ENCODE measurements at regions of chr16 and their contacts with region 1.

Region 1: DNA sequence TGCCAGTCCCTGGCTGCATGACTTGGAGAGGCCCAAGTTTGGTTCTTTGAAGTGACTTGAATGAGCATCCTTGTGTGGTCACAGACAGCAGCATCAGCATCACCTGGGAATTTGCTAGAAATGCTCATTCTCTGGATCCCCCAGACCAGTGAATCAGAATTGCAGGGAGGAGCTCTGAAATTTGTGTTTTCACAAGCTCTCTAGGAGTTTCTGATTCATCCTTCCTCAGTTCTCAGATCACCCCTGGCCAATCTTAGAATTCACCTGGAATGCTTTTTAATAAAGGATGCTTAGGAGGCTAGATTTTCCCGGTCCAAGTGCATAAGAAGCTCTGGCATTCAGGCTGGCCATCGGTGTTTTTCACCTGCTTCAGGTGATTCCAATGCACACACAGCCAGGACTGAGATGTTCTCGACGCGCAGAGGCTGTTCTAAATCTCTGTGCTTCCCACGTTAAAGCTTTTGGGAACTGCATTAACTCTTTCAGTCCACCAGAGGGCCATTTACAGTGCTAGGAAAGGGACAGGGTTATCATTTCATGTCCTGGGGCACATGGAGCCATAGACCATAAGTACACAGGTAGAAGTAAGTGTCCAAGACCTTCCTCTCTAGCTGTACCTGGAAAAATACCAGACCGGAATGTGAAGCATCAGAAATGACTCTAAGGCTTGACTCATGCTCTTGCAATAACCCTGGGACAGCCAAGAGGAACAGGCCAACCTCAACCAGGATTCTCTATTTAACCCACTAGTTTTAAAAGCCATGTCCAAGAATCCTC is 85.7 kb upstream of the XYLT1 start:
- DNase-seq: no peak
- H3K4me3 ChIP-seq: no peak overlapping the region
- CTCF ChIP-seq: peak; percentile 57

Region 2: DNA sequence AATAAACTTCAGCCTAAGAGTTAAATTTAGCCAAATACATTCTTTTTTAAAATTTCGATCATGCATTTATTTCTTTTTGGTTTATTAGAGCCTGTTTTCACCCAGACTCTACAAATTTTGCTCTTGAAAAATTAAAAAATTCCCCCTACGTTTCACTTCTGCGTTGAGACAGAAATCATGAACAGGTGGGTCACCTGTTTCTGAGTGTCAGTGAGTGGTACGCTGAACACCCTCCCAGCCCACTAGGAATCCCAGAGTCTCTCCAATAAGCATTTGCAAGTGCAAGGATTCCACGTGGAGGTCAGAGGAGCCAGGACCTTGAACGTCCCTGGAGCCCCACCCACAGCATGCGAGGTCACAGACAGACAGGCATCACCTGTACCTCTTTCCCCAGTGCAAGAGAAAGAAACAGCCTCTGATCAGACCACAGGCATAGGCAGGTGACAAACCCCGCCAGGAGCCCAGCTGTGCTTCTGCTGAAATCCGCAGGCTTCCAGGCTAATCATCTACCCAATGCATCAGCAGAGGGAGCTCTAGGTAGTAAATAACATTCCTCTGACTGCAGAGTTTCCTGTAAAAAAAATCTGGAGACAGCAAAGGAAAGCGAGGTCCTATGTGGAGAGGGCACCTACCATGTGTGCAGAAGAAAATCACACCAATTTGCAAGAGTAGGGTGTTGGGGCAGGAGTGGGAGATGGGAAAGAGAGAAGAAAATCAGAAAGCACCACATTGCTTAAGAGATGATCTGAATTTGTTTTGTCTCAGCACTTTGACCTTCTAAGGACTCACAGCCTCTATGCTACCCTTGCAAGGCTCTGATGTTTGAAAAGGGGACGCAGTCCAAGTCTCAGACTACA is 79.8 kb before region 1 on chr16:
- CTCF ChIA-PET with region 1: interaction called, 78 read pairs
- POLR2A ChIA-PET with region 1: no interaction called
- DNase-seq: no peak
- H3K4me3 ChIP-seq: no peak overlapping the region
- CTCF ChIP-seq: peak; percentile 67

Region 3: GRCh38 chr16:17511340-17511739 is 45.1 kb before region 1 on chr16:
- CTCF ChIA-PET with region 1: interaction called, 19 read pairs
- POLR2A ChIA-PET with region 1: interaction called, 3 read pairs
- DNase-seq: peak; percentile 73
- H3K4me3 ChIP-seq: no peak overlapping the region
- CTCF ChIP-seq: no peak

Region 4: DNA sequence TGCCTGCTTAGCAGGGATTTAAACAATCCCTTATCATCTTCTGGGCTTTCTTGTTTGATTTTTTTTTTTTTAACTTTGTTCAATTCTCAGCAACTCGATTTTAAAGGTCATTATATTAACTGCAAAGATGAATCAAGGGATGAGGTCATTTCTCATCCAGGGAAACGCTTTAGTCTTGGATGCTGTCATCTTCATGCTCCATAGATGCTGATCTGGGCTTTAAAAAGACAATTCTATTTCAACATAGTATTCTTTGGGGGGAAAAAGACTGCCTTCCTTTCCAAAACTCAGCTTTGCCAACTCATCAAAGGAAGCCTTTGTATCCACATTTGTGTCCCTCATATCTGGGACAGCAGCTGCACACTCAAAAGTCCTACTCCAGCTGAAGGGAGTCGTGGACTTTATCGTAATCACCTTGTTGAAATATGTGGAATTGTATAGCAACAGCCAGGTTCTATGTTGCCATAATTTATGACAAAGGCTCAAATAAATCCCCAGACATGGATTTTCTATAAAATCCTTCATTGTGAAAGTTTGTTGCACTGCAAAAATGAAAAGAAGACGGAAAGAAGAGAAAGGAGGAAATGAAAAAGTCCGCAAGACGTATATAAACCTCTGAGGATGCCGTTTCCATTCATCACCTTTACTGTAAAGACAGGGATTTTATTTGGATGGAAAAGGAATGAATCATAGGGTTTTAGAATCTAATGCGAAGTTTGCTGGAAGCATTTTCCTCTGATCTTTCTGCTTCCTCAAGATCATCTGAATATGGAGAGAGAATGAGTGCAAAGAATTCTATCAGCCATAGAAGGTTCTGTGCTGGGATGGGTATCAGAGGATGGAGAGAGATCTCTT is 37.1 kb before region 1 on chr16:
- CTCF ChIA-PET with region 1: interaction called, 13 read pairs
- POLR2A ChIA-PET with region 1: interaction called, 3 read pairs
- DNase-seq: no peak
- H3K4me3 ChIP-seq: no peak overlapping the region
- CTCF ChIP-seq: no peak

Region 5: DNA sequence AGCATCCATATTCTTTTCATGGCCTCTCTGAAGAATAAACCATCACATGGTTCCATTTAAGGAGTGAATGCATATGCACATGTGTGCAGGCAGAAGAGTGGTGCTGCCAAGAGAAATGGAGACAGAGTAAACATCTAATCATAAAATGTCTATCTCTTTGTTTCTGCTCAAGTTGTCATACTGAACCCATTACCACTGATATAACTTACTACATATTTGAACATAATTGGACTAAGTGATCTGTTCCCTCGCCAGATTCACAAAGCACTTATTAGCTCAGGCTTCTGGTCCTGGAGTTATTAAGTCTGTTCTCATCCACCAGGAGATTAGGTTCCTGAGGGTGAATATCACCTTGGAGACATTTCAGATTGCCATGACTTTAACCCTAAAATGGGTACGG is 13.4 kb before region 1 on chr16:
- CTCF ChIA-PET with region 1: interaction called, 31 read pairs
- POLR2A ChIA-PET with region 1: no interaction called
- DNase-seq: no peak
- H3K4me3 ChIP-seq: no peak overlapping the region
- CTCF ChIP-seq: no peak

Region 6: DNA sequence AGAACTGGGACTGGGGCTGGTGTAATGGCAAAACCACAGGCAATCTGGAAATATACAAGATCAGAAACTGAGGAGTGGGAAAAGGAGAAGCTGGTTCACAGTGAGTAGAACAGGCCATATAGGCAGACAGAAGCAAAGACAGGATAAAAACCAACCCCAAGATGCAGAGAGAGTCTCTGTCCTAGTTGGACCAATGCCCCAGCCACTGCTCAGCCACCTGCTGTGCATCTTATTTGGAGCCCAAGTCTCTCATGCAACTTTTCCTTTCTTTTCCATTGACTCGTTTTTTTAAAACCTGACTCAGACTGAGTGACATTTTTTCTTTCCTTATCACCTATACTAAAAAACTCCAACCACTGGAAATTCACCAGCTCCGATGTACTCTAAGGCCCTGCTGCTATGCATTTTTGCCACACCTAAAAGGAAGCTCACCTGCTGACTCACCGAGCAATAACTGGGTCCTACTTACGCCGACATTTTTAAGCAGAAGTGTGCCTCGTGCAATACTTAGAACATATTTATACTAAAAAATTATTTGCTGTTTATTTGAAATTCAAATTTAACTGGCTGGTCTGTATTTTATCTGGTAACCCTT is 15.1 kb after region 1 on chr16:
- CTCF ChIA-PET with region 1: interaction called, 154 read pairs
- POLR2A ChIA-PET with region 1: no interaction called
- DNase-seq: no peak
- H3K4me3 ChIP-seq: no peak overlapping the region
- CTCF ChIP-seq: no peak

Measured in AG04449 (cell line).